H1 (cell line): ENCODE measurements at regions of chr5 and their contacts with region 1.

Region 1: GRCh38 chr5:174056064-174056847 is 10.8 kb downstream of the NSG2 start:
- DNase-seq: no peak
- H3K4me3 ChIP-seq: no peak overlapping the region
- H3K27ac ChIP-seq: no peak overlapping the region
- H3K4me1 ChIP-seq: no peaks in the 10 kb centered on the region
- H3K27me3 ChIP-seq: no peaks in the 10 kb centered on the region
- CTCF ChIP-seq: peak in 1 of 3 experiments; percentile 40; a peak in 2 of 4 replicates
- EP300 ChIP-seq: no peak
- POLR2A ChIP-seq: no peak
- RAD21 ChIP-seq: peak; percentile 9 to 30; a peak in 2 of 4 replicates

Region 2: DNA sequence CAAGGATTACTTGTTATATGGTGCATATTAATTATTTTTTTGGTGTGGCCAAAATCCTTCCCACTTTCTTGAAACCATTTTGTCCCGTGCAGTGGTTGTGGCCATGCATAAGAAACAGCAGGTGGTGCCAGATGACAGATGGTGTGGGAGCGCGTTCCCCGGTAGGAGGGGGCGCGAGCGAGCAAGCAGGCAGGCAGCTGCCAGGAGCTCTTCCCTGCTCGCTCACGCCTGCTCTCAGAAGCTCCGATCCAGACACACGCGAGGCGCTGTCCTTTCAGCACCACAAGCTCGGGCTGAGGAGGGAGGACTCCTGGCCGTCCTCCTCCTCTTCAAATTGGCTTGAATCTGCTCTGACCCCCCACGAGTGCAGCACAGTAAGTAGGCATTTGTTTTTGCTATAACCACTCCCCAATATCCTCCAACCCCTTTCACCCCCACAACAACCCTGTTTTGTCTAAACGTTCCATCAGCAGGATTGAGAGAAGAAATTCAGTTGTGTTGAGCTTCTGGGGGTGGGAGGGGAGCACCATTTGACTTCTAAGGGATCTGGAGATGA is 10.7 kb before region 1 on chr5 and contains the start of gene NSG2:
- CTCF ChIA-PET with region 1: interaction called, 45 read pairs
- POLR2A ChIA-PET with region 1: no interaction called
- DNase-seq: peak; percentile 83 to 87
- H3K4me3 ChIP-seq: no peak within 1 kb of the TSS
- H3K27ac ChIP-seq: no peak within 1 kb of the TSS
- H3K4me1 ChIP-seq: no peaks in the 10 kb centered on the region
- H3K27me3 ChIP-seq: no peaks in the 10 kb centered on the region
- CTCF ChIP-seq: peak; percentile 80 to 95 (median 81)
- EP300 ChIP-seq: no peak
- POLR2A ChIP-seq: no peak
- RAD21 ChIP-seq: peak; percentile 98 to 100
- total RNA-seq, gene NSG2: 0.34 and 0.78 TPM in 2 replicates

Region 3: DNA sequence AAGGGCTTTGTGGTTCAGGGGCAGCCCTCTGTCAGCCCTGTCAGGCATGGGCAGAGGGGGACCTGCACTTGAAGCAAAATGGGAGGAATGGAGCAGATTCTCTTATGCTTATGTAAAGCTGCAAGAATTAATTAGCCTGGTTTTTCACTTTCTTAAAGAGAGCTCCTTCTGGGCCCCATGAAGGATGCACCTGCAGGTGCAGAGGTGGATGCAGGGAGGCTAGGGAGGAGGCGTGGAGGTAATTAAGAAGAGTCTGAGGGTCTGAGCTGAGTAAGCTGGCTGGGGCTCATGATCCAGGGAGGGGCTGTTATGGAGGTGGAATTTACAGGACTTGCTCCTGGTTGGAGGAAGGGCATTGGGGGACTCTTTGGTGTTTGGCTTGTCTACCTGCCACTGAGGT is 11.2 kb after region 1 on chr5:
- CTCF ChIA-PET with region 1: interaction called, 10 read pairs
- POLR2A ChIA-PET with region 1: no interaction called
- DNase-seq: no peak
- H3K4me3 ChIP-seq: no peak overlapping the region
- H3K27ac ChIP-seq: no peak overlapping the region
- H3K4me1 ChIP-seq: no peaks in the 10 kb centered on the region
- H3K27me3 ChIP-seq: no peaks in the 10 kb centered on the region
- CTCF ChIP-seq: no peak
- EP300 ChIP-seq: no peak
- POLR2A ChIP-seq: no peak
- RAD21 ChIP-seq: no peak